ENCODE measurements at regions of chr15 and their contacts with region 1.

Region 1: GRCh38 chr15:62549345-62549970 is 384.4 kb upstream of the C2CD4B start:
- DNase-seq: no peak
- ATAC-seq: no peak
- H3K4me3 ChIP-seq: no peak overlapping the region
- H3K27ac ChIP-seq: no peak overlapping the region
- H3K4me1 ChIP-seq: peaks cover 34 to 51% of the 10 kb centered on the region in 2 donors
- H3K27me3 ChIP-seq: no peaks in the 10 kb centered on the region
- CTCF ChIP-seq: peak in 4 of 5 experiments; percentile 33 to 50 (median 39)
- POLR2A ChIP-seq: no peak

Region 2: DNA sequence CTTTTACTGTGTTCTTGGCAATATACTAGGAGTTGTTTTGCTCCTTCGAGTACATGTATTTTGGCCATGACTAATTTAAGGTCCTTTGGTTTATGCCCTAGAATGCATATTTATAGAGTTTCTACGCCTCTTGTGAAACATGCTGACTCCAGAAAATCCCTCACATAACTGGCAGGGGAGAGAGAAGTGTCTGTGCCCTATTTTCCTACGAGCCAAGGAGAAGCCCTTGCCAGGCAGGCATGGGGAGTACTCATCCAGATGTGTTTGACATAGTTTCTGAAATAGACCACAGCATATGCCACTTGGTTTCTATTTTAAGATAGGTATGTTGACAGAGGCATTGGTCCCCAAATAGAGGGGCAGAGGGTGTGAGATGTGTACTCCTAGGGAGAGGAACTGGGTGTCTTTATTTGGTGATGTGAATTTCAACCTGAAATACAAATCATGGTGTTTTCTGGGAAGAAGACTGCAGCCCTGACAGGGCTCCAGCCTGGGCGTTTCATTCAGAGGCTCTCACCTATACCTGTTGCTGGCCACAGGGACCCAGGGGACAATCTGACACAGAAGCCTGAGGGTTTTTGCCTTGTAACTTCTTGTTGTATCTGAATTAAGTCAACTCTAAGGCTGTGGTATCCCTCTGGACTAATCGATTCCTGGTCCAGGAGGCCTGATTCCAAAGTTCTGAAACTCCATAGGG is 116.6 kb before region 1 on chr15:
- in situ Hi-C with region 1: no loop called
- intact Hi-C with region 1: loop called (anchors 1 kb)
- DNase-seq: peak; percentile 83 to 85
- ATAC-seq: peak; percentile 93 to 96
- H3K4me3 ChIP-seq: no peak overlapping the region
- H3K27ac ChIP-seq: peak overlapping the region; percentile 81 to 91 (median 84)
- H3K4me1 ChIP-seq: peaks cover 22 to 49% of the 10 kb centered on the region in 2 donors
- H3K27me3 ChIP-seq: no peaks in the 10 kb centered on the region
- CTCF ChIP-seq: no peak
- POLR2A ChIP-seq: no peak

Region 3: GRCh38 chr15:62469874-62470688 is 79.4 kb before region 1 on chr15:
- in situ Hi-C with region 1: no loop called
- intact Hi-C with region 1: loop called (anchors 5 kb)
- DNase-seq: peak in 1 of 2 donors; percentile 66
- ATAC-seq: peak in 1 of 2 donors; percentile 10
- H3K4me3 ChIP-seq: no peak overlapping the region
- H3K27ac ChIP-seq: peak overlapping the region; percentile 56 to 92 (median 65)
- H3K4me1 ChIP-seq: peaks cover 71 to 77% of the 10 kb centered on the region in 2 donors
- H3K27me3 ChIP-seq: no peaks in the 10 kb centered on the region
- CTCF ChIP-seq: no peak
- POLR2A ChIP-seq: no peak

Region 4: GRCh38 chr15:62649793-62650420 is 100.4 kb after region 1 on chr15:
- in situ Hi-C with region 1: no loop called
- intact Hi-C with region 1: loop called (anchors 5 kb)
- DNase-seq: peak in 1 of 2 donors; percentile 52
- ATAC-seq: peak in 1 of 2 donors; percentile 65
- H3K4me3 ChIP-seq: no peak overlapping the region
- H3K27ac ChIP-seq: peak overlapping the region; percentile 19 to 69 (median 51)
- H3K4me1 ChIP-seq: peaks cover 19 to 39% of the 10 kb centered on the region in 2 donors
- H3K27me3 ChIP-seq: no peaks in the 10 kb centered on the region
- CTCF ChIP-seq: no peak
- POLR2A ChIP-seq: no peak